Aorta (tissue), 5 donors: ENCODE measurements at regions of chr20 and their contacts with region 1.

Region 1: GRCh38 chr20:10982692-10983091 is 308.9 kb upstream of the JAG1 start:
- DNase-seq: peak; percentile 77 to 78
- ATAC-seq: peak; percentile 76
- H3K4me3 ChIP-seq: peak overlapping the region in 1 of 2 donors; percentile 28
- H3K27ac ChIP-seq: peak overlapping the region in 1 of 2 donors; percentile 14
- H3K4me1 ChIP-seq: peaks cover 8% of the 10 kb centered on the region in 2 donors
- H3K27me3 ChIP-seq: no peaks in the 10 kb centered on the region

Region 2: DNA sequence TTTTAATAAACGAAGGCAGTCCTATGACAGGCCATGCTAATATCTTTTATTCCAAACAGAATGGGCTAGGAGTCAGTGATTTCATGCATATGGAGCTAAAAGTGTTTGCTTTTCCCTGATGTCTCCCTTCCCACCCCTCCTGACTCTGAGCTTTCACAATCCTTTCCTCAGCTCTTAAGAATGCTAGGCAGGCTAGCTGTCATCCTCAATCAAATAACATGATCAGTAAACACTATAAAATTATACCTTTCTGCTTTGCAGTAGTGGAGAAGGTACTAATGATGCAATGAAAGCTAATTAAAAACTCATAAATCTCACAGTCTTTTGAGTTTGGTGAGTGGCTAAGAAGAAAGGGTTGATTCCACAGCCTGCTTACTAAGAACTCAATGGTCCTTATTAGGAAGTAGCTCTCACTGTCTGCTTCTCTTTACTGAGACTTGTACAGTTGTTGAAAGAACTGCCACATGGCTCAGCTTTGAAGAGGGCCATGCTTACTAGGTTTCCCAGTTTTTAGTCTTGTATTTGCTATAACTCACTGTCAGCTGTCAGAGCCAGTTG is 58.0 kb before region 1 on chr20:
- intact Hi-C with region 1: loop called in 1 of 2 experiments (anchors 5 kb)
- DNase-seq: no peak
- ATAC-seq: no peak
- H3K4me3 ChIP-seq: no peak overlapping the region
- H3K27ac ChIP-seq: no peak overlapping the region
- H3K4me1 ChIP-seq: peaks cover 0 to 3% of the 10 kb centered on the region in 2 donors
- H3K27me3 ChIP-seq: no peaks in the 10 kb centered on the region

Region 3: DNA sequence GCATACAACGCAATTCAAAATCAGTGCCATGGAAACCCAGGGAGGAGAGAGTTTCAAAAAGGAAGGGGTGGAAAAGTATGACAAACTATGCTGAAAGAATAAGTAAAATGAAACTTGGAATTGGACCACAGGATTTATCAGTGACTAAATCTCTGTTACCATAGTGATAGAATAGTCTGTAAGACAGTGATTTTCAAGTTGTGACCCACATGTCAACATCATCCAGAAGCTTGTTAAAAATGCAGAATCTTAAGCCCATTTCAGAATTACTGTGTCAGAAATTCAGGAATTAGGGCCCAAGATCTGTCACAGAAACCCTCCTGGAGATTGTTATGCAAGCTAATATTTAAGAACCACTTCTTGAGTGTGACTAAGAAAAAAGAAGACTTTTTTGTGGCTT is 108.8 kb after region 1 on chr20:
- intact Hi-C with region 1: no loop called
- DNase-seq: no peak
- ATAC-seq: no peak
- H3K4me3 ChIP-seq: no peak overlapping the region
- H3K27ac ChIP-seq: no peak overlapping the region
- H3K4me1 ChIP-seq: no peaks in the 10 kb centered on the region
- H3K27me3 ChIP-seq: no peaks in the 10 kb centered on the region

Region 4: GRCh38 chr20:11117808-11118528 is 135.3 kb after region 1 on chr20:
- intact Hi-C with region 1: no loop called
- DNase-seq: peak in 1 of 2 donors; percentile 42
- ATAC-seq: peak; percentile 57
- H3K4me3 ChIP-seq: no peak overlapping the region
- H3K27ac ChIP-seq: no peak overlapping the region
- H3K4me1 ChIP-seq: no peaks in the 10 kb centered on the region
- H3K27me3 ChIP-seq: no peaks in the 10 kb centered on the region